CD14-positive monocyte (primary cell): ENCODE measurements at regions of chr20 and their contacts with region 1.

Region 1: DNA sequence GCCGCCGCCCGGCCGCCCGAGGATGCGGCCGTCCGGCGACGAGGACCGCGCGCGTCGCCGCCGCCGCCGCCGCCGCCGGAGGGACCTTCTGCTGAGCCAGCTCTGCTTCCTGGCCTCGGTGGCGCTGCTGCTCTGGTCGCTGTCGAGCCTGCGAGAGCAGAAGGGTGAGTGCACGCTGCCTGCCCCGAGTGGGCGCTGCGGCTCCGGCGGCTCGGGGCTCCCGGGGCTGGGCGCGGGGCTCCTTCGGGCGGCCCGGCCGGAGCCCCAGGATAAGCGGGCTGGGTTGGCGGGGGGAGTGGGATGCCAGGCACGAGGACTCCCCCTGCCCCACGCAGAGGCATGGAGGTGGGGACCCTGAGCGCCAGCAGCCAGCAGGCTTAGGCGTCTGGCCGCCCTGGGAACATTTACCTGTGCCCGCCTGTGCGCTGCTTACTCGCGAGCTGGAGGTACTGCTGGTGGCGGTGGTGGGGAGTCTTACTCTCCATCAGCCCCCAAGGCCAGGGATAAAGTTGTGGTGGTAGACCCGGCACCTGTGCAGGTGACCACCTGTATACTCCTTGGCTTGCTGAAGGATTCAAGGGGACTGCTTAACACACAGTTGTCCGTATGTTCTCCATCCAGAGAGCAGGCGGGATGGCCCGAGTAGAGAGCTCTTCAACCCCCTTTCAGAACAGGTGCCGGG is 520 bp downstream of the SLC24A3 start:
- DNase-seq: peak; percentile 64 to 78 (median 71)
- H3K4me3 ChIP-seq: peak overlapping the region in 2 of 3 experiments; percentile 22 to 71
- H3K4me3 Mint-ChIP-seq: peak overlapping the region; percentile 23 to 65
- H3K27ac ChIP-seq: no peak overlapping the region
- H3K27ac Mint-ChIP-seq: no peak overlapping the region
- H3K4me1 ChIP-seq: peaks cover 19 to 21% of the 10 kb centered on the region in 2 donors
- H3K4me1 Mint-ChIP-seq: peaks cover 25% of the 10 kb centered on the region
- H3K27me3 ChIP-seq: peaks cover 12 to 21% of the 10 kb centered on the region in 2 donors
- H3K27me3 Mint-ChIP-seq: peaks cover 23 to 42% (median 32%) of the 10 kb centered on the region in 3 donors
- CTCF ChIP-seq: peak; percentile 48

Region 2: DNA sequence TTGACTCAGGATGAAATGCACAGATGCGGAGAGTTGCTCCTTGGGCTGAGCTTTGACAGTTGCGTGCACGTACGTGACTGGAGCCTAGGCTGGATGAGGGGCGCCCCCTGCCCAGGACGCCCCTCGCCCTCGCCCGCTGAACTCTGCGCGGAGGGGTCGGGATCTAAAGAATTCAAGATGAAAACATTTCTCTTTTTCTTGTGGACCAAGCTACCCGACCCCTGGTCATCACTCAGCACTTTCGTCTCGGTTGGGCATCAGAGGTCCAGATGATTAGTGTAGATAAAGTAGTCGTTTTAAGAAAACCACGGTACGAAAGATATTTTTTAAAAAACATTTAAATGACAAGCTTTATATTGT is 624.4 kb before region 1 on chr20:
- intact Hi-C with region 1: no loop called
- DNase-seq: no peak
- H3K4me3 ChIP-seq: peak overlapping the region; percentile 75 to 94 (median 77)
- H3K4me3 Mint-ChIP-seq: peak overlapping the region; percentile 89 to 91
- H3K27ac ChIP-seq: peak overlapping the region; percentile 16 to 58
- H3K27ac Mint-ChIP-seq: peak overlapping the region in 6 of 7 donors; percentile 62 to 89 (median 85)
- H3K4me1 ChIP-seq: peaks cover 13 to 14% of the 10 kb centered on the region in 2 donors
- H3K4me1 Mint-ChIP-seq: peaks cover 15% of the 10 kb centered on the region
- H3K27me3 ChIP-seq: no peaks in the 10 kb centered on the region
- H3K27me3 Mint-ChIP-seq: peaks cover 2 to 7% (median 3%) of the 10 kb centered on the region in 3 donors
- CTCF ChIP-seq: no peak

Region 3: DNA sequence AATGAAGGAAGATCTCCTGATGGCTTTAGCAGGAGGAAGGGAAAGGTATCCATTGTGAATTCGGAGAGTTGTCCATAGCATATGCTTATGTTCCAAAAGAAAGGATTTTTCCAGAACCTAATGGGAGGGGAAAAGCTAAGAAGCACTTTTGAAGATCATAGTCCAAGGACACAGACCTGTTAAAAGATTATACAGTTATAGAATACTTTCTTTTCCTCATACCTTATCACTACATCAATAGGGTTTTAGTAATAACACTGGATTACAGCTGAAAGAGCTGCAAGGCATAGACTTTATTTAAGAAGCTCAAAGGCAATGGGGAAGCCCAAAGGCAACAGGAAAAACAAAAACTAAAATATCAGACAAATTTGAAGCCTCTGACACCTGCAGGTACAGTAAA is 40.3 kb before region 1 on chr20:
- intact Hi-C with region 1: no loop called
- DNase-seq: no peak
- H3K4me3 ChIP-seq: no peak overlapping the region
- H3K4me3 Mint-ChIP-seq: no peak overlapping the region
- H3K27ac ChIP-seq: no peak overlapping the region
- H3K27ac Mint-ChIP-seq: no peak overlapping the region
- H3K4me1 ChIP-seq: no peaks in the 10 kb centered on the region
- H3K4me1 Mint-ChIP-seq: no peaks in the 10 kb centered on the region
- H3K27me3 ChIP-seq: no peaks in the 10 kb centered on the region
- H3K27me3 Mint-ChIP-seq: peaks cover 0 to 2% (median 1%) of the 10 kb centered on the region in 3 donors
- CTCF ChIP-seq: no peak

Region 4: DNA sequence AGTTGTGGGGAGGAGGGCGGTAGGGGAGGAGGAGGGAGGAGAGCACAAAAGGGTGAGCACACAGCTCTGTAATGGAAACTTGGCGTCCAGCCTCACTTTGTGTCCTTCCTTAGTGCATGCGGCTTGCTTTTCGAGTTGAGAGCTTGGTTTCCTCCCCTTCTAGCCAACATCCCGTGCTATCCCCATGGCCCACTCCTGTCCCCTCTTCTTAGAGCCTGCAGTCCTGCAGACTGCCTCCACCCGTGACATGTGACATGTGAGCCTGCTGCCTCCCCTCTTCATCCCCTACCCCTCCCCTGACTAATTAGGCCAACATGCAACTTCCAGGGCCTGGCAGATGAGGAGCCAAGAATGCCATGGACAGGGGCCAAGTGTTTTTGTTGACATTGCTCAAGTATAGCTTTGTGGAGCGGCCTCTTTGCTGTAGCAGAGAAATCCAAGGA is 62.7 kb after region 1 on chr20:
- intact Hi-C with region 1: loop called in 1 of 2 experiments (anchors 10 kb)
- DNase-seq: no peak
- H3K4me3 ChIP-seq: no peak overlapping the region
- H3K4me3 Mint-ChIP-seq: no peak overlapping the region
- H3K27ac ChIP-seq: no peak overlapping the region
- H3K27ac Mint-ChIP-seq: peak overlapping the region in 1 of 7 donors; percentile 23
- H3K4me1 ChIP-seq: peaks cover 19 to 24% of the 10 kb centered on the region in 2 donors
- H3K4me1 Mint-ChIP-seq: peaks cover 40% of the 10 kb centered on the region
- H3K27me3 ChIP-seq: no peaks in the 10 kb centered on the region
- H3K27me3 Mint-ChIP-seq: peaks cover 0 to 2% (median 2%) of the 10 kb centered on the region in 3 donors
- CTCF ChIP-seq: no peak

Region 5: GRCh38 chr20:19317237-19318069 is 104.5 kb after region 1 on chr20:
- intact Hi-C with region 1: loop called in 1 of 2 experiments (anchors 10 kb)
- DNase-seq: no peak
- H3K4me3 ChIP-seq: no peak overlapping the region
- H3K4me3 Mint-ChIP-seq: no peak overlapping the region
- H3K27ac ChIP-seq: no peak overlapping the region
- H3K27ac Mint-ChIP-seq: peak overlapping the region in 1 of 7 donors; percentile 0
- H3K4me1 ChIP-seq: peaks cover 21 to 28% of the 10 kb centered on the region in 2 donors
- H3K4me1 Mint-ChIP-seq: peaks cover 35% of the 10 kb centered on the region
- H3K27me3 ChIP-seq: no peaks in the 10 kb centered on the region
- H3K27me3 Mint-ChIP-seq: peaks cover 2 to 5% (median 3%) of the 10 kb centered on the region in 3 donors
- CTCF ChIP-seq: no peak

Region 6: DNA sequence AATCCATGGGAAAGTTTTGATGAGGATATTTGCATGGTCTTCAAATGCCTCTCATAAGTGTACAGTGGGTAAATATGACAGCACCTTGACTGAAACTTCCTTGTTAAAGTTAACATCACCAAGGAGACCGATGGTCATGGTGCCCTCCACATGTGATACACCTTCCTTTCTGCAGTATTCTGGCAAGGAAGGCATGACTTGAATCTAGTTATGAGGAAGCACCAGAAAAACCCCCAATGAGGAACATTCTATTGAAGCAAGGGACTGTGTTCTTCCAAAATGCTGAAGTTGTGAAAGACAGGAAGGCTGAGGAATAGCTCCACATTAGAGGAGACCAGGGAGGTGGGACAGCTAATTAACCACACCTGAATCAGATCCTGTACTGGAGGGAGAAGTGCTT is 117.8 kb after region 1 on chr20:
- intact Hi-C with region 1: no loop called
- DNase-seq: peak in 2 of 3 donors; percentile 41 to 54
- H3K4me3 ChIP-seq: no peak overlapping the region
- H3K4me3 Mint-ChIP-seq: no peak overlapping the region
- H3K27ac ChIP-seq: no peak overlapping the region
- H3K27ac Mint-ChIP-seq: peak overlapping the region in 1 of 7 donors; percentile 1
- H3K4me1 ChIP-seq: peaks cover 5 to 7% of the 10 kb centered on the region in 2 donors
- H3K4me1 Mint-ChIP-seq: peaks cover 15% of the 10 kb centered on the region
- H3K27me3 ChIP-seq: no peaks in the 10 kb centered on the region
- H3K27me3 Mint-ChIP-seq: no peaks in the 10 kb centered on the region
- CTCF ChIP-seq: no peak